Dorsolateral prefrontal cortex (tissue), 120 donors: ENCODE measurements at regions of chr9 and their contacts with region 1.

Region 1: DNA sequence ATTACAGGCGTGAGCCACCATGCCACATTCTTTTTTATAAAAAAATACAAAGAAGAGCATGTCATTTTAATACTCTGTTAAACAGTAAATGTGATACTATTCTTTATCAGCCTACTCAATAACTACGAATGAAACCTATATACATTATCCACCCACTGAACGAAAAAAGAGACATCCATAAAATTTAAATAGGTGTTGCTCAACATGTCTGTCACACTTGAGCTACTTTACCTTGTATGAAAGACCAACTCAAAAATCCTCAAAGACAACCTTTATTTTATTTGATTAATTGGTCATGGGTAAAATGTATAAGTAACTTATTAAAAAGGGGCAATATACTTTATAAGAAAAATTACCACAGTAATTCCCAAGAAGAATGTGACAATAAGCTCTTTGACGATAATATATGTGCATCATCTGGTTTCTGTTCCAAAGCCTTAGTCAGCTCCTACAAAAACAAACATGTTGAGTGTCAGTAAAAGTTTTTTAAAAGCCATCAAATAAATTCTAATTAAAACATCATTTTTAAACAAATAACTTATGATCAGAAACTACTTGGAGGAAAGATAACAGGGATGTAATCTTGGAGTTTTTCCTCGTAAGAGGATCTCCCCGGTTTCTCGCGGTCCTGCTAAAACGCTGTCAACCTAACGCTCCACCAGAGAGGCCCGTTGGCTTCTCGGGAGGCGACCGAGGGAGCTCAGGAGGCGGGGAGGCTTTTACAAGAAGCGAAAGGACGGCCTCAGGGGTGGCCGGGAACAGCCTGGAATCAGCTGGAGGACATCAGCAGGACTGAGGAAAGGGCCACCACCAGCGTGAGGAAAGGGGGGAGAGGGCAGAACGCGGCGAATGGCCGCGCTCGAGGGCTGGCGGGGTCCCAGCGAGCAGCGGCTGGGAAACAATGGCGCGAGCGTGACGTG is 13.5 kb upstream of the ANKRD18B start:
- DNase-seq: peak; percentile 56 to 79 (median 63)
- H3K4me3 ChIP-seq: peak overlapping the region; percentile 41 to 88 (median 73)
- H3K27ac ChIP-seq: peak overlapping the region; percentile 56 to 98 (median 92)
- H3K27me3 ChIP-seq: no peaks in the 10 kb centered on the region
- CTCF ChIP-seq: peak in 16 of 56 donors; percentile 4 to 43 (median 13)

Region 2: DNA sequence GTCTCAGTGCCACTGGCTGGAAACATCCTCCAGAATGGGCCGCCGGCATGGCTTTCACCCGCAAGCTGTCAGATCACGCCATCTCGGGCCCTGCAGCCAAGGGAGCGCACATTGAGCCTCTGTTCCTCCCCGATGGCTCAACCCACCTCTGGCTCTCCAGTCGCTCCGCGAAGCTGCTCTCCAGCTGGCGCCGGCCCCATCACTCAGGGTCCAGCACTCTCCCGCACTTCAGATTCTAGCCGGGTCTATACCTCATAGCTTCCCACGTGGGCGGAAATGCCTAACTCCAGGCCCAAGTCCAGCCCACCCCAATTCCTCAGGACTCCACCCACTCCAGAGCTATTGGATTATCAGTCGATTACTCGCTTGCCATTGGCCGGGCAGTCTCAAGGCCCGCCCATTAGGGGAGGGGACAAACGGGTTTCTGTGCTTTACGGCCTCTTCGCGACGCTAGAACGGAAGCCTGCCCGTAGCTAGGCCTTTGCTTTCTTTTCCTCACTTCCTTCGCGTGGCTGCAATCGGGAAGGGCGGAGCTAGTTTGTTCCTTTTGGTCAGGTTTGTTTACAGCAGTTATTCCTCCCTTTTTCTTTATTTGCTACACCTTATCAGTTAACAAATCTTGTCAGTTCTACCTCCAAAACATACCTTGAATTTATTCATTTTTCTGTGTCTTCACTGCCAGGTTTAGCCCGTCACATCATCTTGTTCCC is 36.7 kb before region 1 on chr9 and contains the start of gene NOL6:
- intact Hi-C with region 1: loop called in 1 of 2 experiments (anchors 5 kb)
- DNase-seq: peak; percentile 93 to 99 (median 98)
- H3K4me3 ChIP-seq: peak within 1 kb of the TSS; percentile 66 to 100 (median 91)
- H3K27ac ChIP-seq: peak within 1 kb of the TSS in 51 of 59 donors; percentile 6 to 88 (median 74)
- H3K27me3 ChIP-seq: no peaks in the 10 kb centered on the region
- CTCF ChIP-seq: peak in 33 of 56 donors; percentile 8 to 55 (median 32)
- total RNA-seq, gene NOL6: 18.9 to 46.6 (median 33.1) TPM